ENCODE measurements at regions of chr5 and their contacts with region 1.

Region 1: DNA sequence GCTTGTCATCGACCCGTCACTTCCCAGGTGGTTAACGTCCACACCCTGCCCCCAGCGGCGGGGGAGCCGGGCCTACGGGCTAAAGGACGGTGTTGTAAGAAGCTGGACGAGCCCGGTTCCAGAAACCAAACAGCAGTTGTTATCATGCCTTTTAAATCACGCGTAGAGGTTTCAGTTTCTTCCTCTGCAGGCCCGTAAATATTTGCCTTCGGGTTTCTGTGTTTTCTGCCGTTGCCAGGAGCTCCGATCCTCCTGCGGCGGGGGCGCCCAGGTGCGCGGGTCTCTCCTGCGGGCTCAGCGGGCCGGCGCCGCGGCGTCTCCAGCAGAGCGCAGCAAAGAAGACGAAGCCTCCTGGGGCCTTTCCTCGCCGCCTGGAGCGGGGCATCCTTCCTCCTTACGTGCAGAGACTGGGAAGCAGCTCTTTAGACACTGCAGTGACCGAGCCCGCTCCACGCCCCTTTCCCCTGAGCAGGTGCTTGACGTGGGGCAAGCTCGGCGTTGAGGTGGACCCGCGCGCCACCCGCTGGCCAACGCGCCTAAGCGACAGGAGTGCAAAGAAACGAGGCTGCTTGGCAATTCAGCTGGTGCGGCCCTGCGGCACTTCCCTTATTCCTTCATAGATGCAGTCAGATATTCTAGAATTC is 21.8 kb upstream of the TTC1 start:
- DNase-seq: peak; percentile 85
- H3K4me3 Mint-ChIP-seq: peak overlapping the region; percentile 13
- H3K27ac Mint-ChIP-seq: no peak overlapping the region
- H3K4me1 Mint-ChIP-seq: peaks cover 12% of the 10 kb centered on the region
- H3K27me3 Mint-ChIP-seq: no peaks in the 10 kb centered on the region
- CTCF ChIP-seq: peak; percentile 98

Region 2: GRCh38 chr5:159286420-159287035 is 700.6 kb before region 1 on chr5:
- CTCF ChIA-PET with region 1: interaction called, 39 read pairs
- POLR2A ChIA-PET with region 1: interaction called, 3 read pairs
- intact Hi-C with region 1: loop called (anchors 1 kb)
- DNase-seq: peak; percentile 62
- H3K4me3 Mint-ChIP-seq: no peak overlapping the region
- H3K27ac Mint-ChIP-seq: no peak overlapping the region
- H3K4me1 Mint-ChIP-seq: no peaks in the 10 kb centered on the region
- H3K27me3 Mint-ChIP-seq: no peaks in the 10 kb centered on the region
- CTCF ChIP-seq: peak; percentile 67

Region 3: DNA sequence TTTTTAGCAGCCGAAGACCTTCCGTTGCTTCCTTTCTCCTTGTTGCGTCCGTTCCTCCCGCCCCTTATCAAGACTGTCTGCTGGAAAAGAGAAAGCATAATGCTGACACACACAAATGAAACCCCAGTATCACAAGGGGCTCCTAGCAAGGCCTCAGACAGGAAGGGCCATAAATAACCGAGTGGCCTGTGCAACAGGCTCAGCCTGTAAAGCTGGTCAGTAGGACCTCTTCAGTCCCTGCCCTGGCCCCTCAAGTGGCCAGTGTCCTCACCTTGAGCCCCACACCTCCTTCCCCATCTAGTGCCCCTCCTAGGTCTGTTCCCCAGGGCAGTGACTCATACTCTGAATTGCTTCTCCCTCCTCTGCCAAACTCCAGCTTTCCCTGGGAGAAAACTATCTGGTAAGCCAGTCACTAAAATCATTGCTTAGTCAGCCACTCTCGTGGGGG is 482.3 kb before region 1 on chr5:
- CTCF ChIA-PET with region 1: interaction called, 18 read pairs
- POLR2A ChIA-PET with region 1: no interaction called
- intact Hi-C with region 1: no loop called
- DNase-seq: peak; percentile 74
- H3K4me3 Mint-ChIP-seq: no peak overlapping the region
- H3K27ac Mint-ChIP-seq: no peak overlapping the region
- H3K4me1 Mint-ChIP-seq: peaks cover 6% of the 10 kb centered on the region
- H3K27me3 Mint-ChIP-seq: no peaks in the 10 kb centered on the region
- CTCF ChIP-seq: no peak

Region 4: DNA sequence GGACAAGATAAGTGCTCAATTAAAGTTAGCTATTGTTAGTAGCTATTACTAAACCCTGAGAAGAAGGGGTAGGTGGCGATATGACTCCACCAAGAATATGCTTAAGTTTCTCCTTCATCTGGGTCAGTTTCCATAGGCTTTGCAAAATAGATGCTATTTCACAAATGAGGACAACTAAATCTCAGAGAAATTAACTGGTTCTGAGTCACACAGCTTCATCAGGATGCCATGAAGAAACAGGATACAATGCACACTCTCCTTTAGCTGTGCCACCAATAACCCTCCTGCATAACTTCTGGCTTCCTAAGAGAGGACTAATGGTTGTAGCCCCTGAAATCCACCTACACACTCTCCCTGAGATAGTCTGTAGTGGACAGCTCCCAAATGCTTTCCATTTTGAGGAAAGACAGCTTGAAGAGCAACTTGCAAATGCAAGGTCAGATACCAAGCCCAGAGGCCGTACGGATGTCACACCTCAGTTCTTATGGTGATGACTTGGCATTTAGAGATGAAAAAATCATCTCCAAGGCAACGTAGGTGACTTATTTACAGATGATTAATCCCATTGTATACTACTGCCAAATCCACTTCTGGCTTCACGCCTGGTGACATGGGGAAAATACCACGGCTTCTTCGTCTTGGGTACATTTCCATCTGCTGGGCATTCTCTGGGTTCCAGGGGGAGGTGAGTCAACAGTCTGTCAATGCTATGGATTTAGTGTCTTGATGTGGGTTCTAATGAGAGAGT is 405.5 kb before region 1 on chr5:
- CTCF ChIA-PET with region 1: interaction called, 34 read pairs
- POLR2A ChIA-PET with region 1: interaction called, 4 read pairs
- intact Hi-C with region 1: loop called (anchors 1 kb)
- DNase-seq: peak; percentile 100
- H3K4me3 Mint-ChIP-seq: no peak overlapping the region
- H3K27ac Mint-ChIP-seq: peak overlapping the region; percentile 91
- H3K4me1 Mint-ChIP-seq: peaks cover 29% of the 10 kb centered on the region
- H3K27me3 Mint-ChIP-seq: no peaks in the 10 kb centered on the region
- CTCF ChIP-seq: no peak

Region 5: DNA sequence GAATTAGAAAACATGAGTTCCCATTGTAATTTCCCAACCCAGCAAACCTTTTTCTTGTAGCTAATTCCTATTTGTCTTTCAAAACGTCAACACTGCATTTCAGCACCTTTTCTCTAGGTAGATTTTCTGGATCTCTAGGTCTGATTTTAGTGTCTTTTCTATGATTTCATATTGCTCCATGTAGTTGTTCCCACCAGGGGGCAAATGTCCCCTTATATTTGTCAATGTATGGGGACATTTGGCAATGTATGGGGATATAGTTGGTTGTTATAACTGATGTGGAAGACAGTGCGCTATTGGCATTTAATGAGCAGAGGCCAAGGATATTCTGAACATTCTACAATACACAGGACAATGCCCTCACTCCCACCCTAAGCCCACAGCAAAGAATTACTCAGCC is 344.8 kb before region 1 on chr5:
- CTCF ChIA-PET with region 1: no interaction called
- POLR2A ChIA-PET with region 1: no interaction called
- intact Hi-C with region 1: no loop called
- DNase-seq: no peak
- H3K4me3 Mint-ChIP-seq: no peak overlapping the region
- H3K27ac Mint-ChIP-seq: no peak overlapping the region
- H3K4me1 Mint-ChIP-seq: no peaks in the 10 kb centered on the region
- H3K27me3 Mint-ChIP-seq: no peaks in the 10 kb centered on the region
- CTCF ChIP-seq: no peak

Region 6: DNA sequence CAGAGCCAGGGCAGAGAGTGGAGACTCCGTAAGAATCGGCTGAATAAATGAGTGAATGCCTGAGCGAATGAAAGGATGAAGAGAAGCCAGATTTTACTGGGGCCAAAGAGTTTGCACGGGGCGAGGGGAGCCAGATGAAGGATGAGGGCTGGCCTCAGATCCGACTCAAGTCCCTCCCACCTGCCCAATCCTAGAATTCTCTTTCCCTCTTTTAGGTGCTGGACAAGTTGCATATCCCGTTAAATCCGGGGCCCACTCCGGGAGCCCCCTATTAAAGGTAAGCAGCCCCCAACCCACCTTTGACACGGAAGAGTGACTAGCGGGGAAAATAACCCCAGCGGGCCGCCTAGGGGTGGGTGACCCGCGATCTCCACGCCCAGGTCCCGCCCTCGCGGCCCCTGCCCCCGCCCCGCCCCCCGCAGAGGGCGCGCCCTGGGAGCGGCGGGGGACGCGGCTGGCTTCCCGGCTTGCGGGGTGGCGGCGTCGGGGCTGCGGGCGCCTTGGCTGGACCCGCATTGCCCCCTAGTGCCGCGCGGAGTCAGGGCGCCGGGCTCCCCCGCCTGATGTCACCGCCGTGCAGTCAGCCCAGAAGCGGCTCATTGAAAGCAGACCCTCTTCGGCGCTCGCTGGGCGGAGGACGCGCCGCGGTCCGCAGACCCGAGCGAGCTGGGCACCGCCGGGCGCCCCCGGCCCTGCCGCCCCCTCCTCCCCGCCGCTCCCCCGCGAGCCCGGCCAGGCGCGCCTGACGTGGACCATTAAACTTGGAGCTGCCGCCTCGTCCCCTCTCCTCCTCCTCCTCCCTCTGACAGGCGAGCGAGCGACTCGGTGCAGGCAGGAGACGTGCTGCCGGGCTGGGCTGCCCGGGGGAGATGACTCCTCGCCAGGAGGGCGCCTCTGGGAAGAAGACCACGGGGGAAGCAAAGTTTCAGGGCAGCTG is 71.0 kb before region 1 on chr5 and contains the start of gene ADRA1B:
- CTCF ChIA-PET with region 1: interaction called, 20 read pairs
- POLR2A ChIA-PET with region 1: interaction called, 3 read pairs
- intact Hi-C with region 1: loop called (anchors 5 kb)
- DNase-seq: peak; percentile 55
- H3K4me3 Mint-ChIP-seq: peak within 1 kb of the TSS; percentile 44
- H3K27ac Mint-ChIP-seq: peak within 1 kb of the TSS; percentile 28
- H3K4me1 Mint-ChIP-seq: peaks cover 44% of the 10 kb centered on the region
- H3K27me3 Mint-ChIP-seq: no peaks in the 10 kb centered on the region
- CTCF ChIP-seq: peak; percentile 63
- total RNA-seq, gene ADRA1B: 0.14 TPM in 1 of 2 replicates, not detected in the other

Region 7: DNA sequence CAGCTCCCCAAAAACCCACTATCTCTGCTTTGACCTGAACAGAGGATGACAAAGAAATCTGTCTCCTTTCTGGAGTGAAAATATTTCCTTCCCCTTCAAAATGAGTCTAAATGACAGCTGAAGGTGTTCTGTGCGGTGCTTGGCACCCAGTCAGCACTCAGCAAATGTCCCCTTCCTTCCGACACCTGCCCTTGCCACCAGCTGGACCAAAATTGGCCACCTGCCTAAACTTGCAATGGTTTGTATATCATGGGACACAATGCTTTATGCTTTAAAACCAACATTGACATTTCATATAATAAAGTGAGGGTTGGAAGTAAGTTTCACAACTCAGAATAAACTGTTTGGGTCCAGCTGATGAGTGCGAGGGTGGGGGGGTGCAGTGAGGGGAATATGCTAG is 14.3 kb after region 1 on chr5:
- CTCF ChIA-PET with region 1: interaction called, 51 read pairs
- POLR2A ChIA-PET with region 1: interaction called, 3 read pairs
- intact Hi-C with region 1: no loop called
- DNase-seq: no peak
- H3K4me3 Mint-ChIP-seq: no peak overlapping the region
- H3K27ac Mint-ChIP-seq: no peak overlapping the region
- H3K4me1 Mint-ChIP-seq: no peaks in the 10 kb centered on the region
- H3K27me3 Mint-ChIP-seq: no peaks in the 10 kb centered on the region
- CTCF ChIP-seq: no peak